Naive thymus-derived CD4-positive, alpha-beta T cell (primary cell): ENCODE measurements at regions of chr12 and their contacts with region 1.

Region 1: DNA sequence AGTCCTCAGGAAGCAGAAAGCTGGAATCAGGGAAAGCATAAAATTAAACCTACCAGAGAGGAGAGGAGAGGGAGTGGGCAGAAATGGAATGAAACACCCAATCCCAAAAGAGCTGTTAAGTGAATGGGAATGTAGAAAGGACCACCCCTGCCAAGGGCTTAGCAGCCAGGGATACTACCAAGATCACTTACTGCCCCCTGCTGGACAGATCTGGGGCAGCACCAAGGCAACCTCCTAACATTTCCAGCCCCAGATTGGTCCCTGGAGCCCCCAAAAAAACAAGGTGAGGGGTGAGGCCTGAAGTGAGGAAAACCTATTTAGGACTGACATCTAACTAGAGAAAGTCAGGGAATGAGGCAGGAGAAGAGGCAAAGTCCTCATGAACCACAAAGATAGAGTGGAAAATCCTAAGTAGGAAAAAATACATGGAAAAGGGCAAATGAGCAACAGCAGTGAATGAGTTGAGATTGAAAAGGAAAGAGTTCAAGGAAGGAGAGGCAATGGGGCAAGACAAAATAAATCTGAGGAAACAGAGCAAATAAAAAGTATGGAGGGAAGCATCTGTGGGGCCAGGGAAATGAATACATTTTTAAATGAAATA is 11.2 kb upstream of the FKBP11 start:
- DNase-seq: peak; percentile 65 to 87 (median 77)
- ATAC-seq: peak; percentile 80
- H3K4me3 ChIP-seq: no peak overlapping the region
- H3K4me3 Mint-ChIP-seq: no peak overlapping the region
- H3K27ac ChIP-seq: no peak overlapping the region
- H3K27ac Mint-ChIP-seq: peak overlapping the region; percentile 1 to 85 (median 68)
- H3K4me1 ChIP-seq: peaks cover 6 to 34% of the 10 kb centered on the region in 2 donors
- H3K4me1 Mint-ChIP-seq: peaks cover 12 to 31% (median 16%) of the 10 kb centered on the region in 7 donors
- H3K27me3 ChIP-seq: no peaks in the 10 kb centered on the region
- H3K27me3 Mint-ChIP-seq: no peaks in the 10 kb centered on the region

Region 2: GRCh38 chr12:48890657-48891418 is 45.6 kb before region 1 on chr12:
- CTCF ChIA-PET with region 1: interaction called, 6 read pairs
- POLR2A ChIA-PET with region 1: no interaction called
- intact Hi-C with region 1: loop called (anchors 1 kb)
- DNase-seq: peak; percentile 51 to 79 (median 64)
- ATAC-seq: peak; percentile 97
- H3K4me3 ChIP-seq: no peak overlapping the region
- H3K4me3 Mint-ChIP-seq: peak overlapping the region in 4 of 10 donors; percentile 2 to 39 (median 16)
- H3K27ac ChIP-seq: no peak overlapping the region
- H3K27ac Mint-ChIP-seq: peak overlapping the region in 1 of 9 donors; percentile 65
- H3K4me1 ChIP-seq: peaks cover 8% of the 10 kb centered on the region in 2 donors
- H3K4me1 Mint-ChIP-seq: peaks cover 0 to 10% (median 0%) of the 10 kb centered on the region in 7 donors
- H3K27me3 ChIP-seq: peaks cover 0 to 4% of the 10 kb centered on the region in 2 donors
- H3K27me3 Mint-ChIP-seq: peaks cover 12 to 30% (median 15%) of the 10 kb centered on the region in 5 donors

Region 3: GRCh38 chr12:48917857-48918537 is 18.5 kb before region 1 on chr12:
- CTCF ChIA-PET with region 1: interaction called, 6 read pairs
- POLR2A ChIA-PET with region 1: interaction called, 18 read pairs
- intact Hi-C with region 1: no loop called
- DNase-seq: peak in 7 of 9 donors; percentile 39 to 63 (median 57)
- ATAC-seq: peak; percentile 89
- H3K4me3 ChIP-seq: peak overlapping the region; percentile 57
- H3K4me3 Mint-ChIP-seq: peak overlapping the region; percentile 84 to 92 (median 88)
- H3K27ac ChIP-seq: peak overlapping the region; percentile 73
- H3K27ac Mint-ChIP-seq: peak overlapping the region; percentile 81 to 94 (median 90)
- H3K4me1 ChIP-seq: peaks cover 14 to 25% of the 10 kb centered on the region in 2 donors
- H3K4me1 Mint-ChIP-seq: peaks cover 20 to 46% (median 43%) of the 10 kb centered on the region in 7 donors
- H3K27me3 ChIP-seq: no peaks in the 10 kb centered on the region
- H3K27me3 Mint-ChIP-seq: no peaks in the 10 kb centered on the region

Region 4: GRCh38 chr12:48957141-48958048 is 20.9 kb after region 1 on chr12 and contains the start of gene ARF3:
- CTCF ChIA-PET with region 1: interaction called, 3 read pairs
- POLR2A ChIA-PET with region 1: no interaction called
- intact Hi-C with region 1: loop called in 1 of 2 experiments (anchors 2 kb)
- DNase-seq: peak; percentile 84 to 92 (median 91)
- ATAC-seq: peak; percentile 96
- H3K4me3 ChIP-seq: peak within 1 kb of the TSS; percentile 86
- H3K4me3 Mint-ChIP-seq: peak within 1 kb of the TSS; percentile 90 to 99 (median 96)
- H3K27ac ChIP-seq: peak within 1 kb of the TSS; percentile 80
- H3K27ac Mint-ChIP-seq: peak within 1 kb of the TSS; percentile 78 to 96 (median 88)
- H3K4me1 ChIP-seq: peaks cover 17 to 22% of the 10 kb centered on the region in 2 donors
- H3K4me1 Mint-ChIP-seq: peaks cover 27 to 55% (median 47%) of the 10 kb centered on the region in 7 donors
- H3K27me3 ChIP-seq: no peaks in the 10 kb centered on the region
- H3K27me3 Mint-ChIP-seq: peaks cover 0 to 29% (median 3%) of the 10 kb centered on the region in 5 donors
- total RNA-seq, gene ARF3: 48.7 to 137 (median 56.1) TPM

Region 5: GRCh38 chr12:48995061-48995879 is 58.8 kb after region 1 on chr12:
- CTCF ChIA-PET with region 1: no interaction called
- POLR2A ChIA-PET with region 1: no interaction called
- intact Hi-C with region 1: loop called in 1 of 2 experiments (anchors 2 kb)
- DNase-seq: peak in 3 of 9 donors; percentile 36 to 56 (median 54)
- ATAC-seq: peak; percentile 51
- H3K4me3 ChIP-seq: no peak overlapping the region
- H3K4me3 Mint-ChIP-seq: peak overlapping the region in 9 of 10 donors; percentile 15 to 81 (median 71)
- H3K27ac ChIP-seq: no peak overlapping the region
- H3K27ac Mint-ChIP-seq: peak overlapping the region in 2 of 9 donors; percentile 31 to 90
- H3K4me1 ChIP-seq: peaks cover 13 to 26% of the 10 kb centered on the region in 2 donors
- H3K4me1 Mint-ChIP-seq: peaks cover 24 to 39% (median 32%) of the 10 kb centered on the region in 7 donors
- H3K27me3 ChIP-seq: peaks cover 0 to 25% of the 10 kb centered on the region in 2 donors
- H3K27me3 Mint-ChIP-seq: peaks cover 48 to 75% (median 56%) of the 10 kb centered on the region in 5 donors

Region 6: GRCh38 chr12:49031553-49032162 is 95.2 kb after region 1 on chr12:
- CTCF ChIA-PET with region 1: no interaction called
- POLR2A ChIA-PET with region 1: no interaction called
- intact Hi-C with region 1: no loop called
- DNase-seq: no peak
- ATAC-seq: no peak
- H3K4me3 ChIP-seq: no peak overlapping the region
- H3K4me3 Mint-ChIP-seq: no peak overlapping the region
- H3K27ac ChIP-seq: no peak overlapping the region
- H3K27ac Mint-ChIP-seq: no peak overlapping the region
- H3K4me1 ChIP-seq: no peaks in the 10 kb centered on the region
- H3K4me1 Mint-ChIP-seq: peaks cover 0 to 10% (median 0%) of the 10 kb centered on the region in 7 donors
- H3K27me3 ChIP-seq: no peaks in the 10 kb centered on the region
- H3K27me3 Mint-ChIP-seq: no peaks in the 10 kb centered on the region

Region 7: GRCh38 chr12:49043856-49044258 is 107.4 kb after region 1 on chr12:
- CTCF ChIA-PET with region 1: no interaction called
- POLR2A ChIA-PET with region 1: no interaction called
- intact Hi-C with region 1: no loop called
- DNase-seq: peak; percentile 65 to 80 (median 75)
- ATAC-seq: peak; percentile 90
- H3K4me3 ChIP-seq: no peak overlapping the region
- H3K4me3 Mint-ChIP-seq: peak overlapping the region in 1 of 10 donors; percentile 7
- H3K27ac ChIP-seq: peak overlapping the region; percentile 40
- H3K27ac Mint-ChIP-seq: peak overlapping the region in 5 of 9 donors; percentile 38 to 81 (median 78)
- H3K4me1 ChIP-seq: peaks cover 0 to 9% of the 10 kb centered on the region in 2 donors
- H3K4me1 Mint-ChIP-seq: peaks cover 0 to 10% (median 4%) of the 10 kb centered on the region in 7 donors
- H3K27me3 ChIP-seq: no peaks in the 10 kb centered on the region
- H3K27me3 Mint-ChIP-seq: no peaks in the 10 kb centered on the region

Region 8: GRCh38 chr12:49110464-49111155 is 174.1 kb after region 1 on chr12 and contains the start of gene LMBR1L:
- CTCF ChIA-PET with region 1: no interaction called
- POLR2A ChIA-PET with region 1: no interaction called
- intact Hi-C with region 1: no loop called
- DNase-seq: peak; percentile 76 to 98 (median 96)
- ATAC-seq: peak; percentile 96
- H3K4me3 ChIP-seq: peak within 1 kb of the TSS; percentile 76
- H3K4me3 Mint-ChIP-seq: peak within 1 kb of the TSS; percentile 95 to 100 (median 98)
- H3K27ac ChIP-seq: peak within 1 kb of the TSS; percentile 95
- H3K27ac Mint-ChIP-seq: peak within 1 kb of the TSS; percentile 96 to 99 (median 99)
- H3K4me1 ChIP-seq: peaks cover 14 to 19% of the 10 kb centered on the region in 2 donors
- H3K4me1 Mint-ChIP-seq: peaks cover 14 to 48% (median 44%) of the 10 kb centered on the region in 7 donors
- H3K27me3 ChIP-seq: no peaks in the 10 kb centered on the region
- H3K27me3 Mint-ChIP-seq: no peaks in the 10 kb centered on the region
- total RNA-seq, gene LMBR1L: 67.4 to 328 (median 263) TPM